Spleen (tissue), 13 donors: ENCODE measurements at regions of chr20 and their contacts with region 1.

Region 1: DNA sequence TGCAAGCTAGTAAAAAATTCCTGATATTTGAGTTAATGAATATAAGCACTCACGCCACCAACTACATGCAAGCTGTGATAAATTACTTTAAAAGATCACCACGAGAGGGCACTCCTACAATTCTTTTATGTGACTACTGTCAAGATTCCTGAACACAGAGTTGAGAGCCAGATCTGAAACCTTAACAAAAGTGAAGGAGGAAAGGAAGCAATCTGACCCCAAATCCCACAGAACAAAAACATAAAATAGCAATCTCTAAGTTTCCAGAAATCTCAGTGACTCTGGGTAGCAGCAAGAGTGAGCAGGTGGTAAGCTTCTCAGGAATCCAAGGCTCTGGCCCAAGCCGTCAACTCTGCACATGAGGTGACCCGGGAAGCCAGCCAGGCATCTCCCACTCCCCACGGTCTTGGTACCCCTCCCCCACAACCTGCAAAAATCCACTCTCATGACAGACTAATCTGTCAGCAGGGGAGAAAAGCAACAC is 55.1 kb downstream of the STAU1 start:
- DNase-seq: no peak
- H3K4me3 ChIP-seq: no peak overlapping the region
- H3K27ac ChIP-seq: peak overlapping the region in 3 of 8 donors; percentile 20 to 31 (median 21)
- H3K4me1 ChIP-seq: peaks cover 3 to 13% (median 7%) of the 10 kb centered on the region in 6 donors
- H3K27me3 ChIP-seq: no peaks in the 10 kb centered on the region
- CTCF ChIP-seq: peak in 9 of 11 experiments; percentile 23 to 63 (median 55)
- POLR2A ChIP-seq: no peak

Region 2: DNA sequence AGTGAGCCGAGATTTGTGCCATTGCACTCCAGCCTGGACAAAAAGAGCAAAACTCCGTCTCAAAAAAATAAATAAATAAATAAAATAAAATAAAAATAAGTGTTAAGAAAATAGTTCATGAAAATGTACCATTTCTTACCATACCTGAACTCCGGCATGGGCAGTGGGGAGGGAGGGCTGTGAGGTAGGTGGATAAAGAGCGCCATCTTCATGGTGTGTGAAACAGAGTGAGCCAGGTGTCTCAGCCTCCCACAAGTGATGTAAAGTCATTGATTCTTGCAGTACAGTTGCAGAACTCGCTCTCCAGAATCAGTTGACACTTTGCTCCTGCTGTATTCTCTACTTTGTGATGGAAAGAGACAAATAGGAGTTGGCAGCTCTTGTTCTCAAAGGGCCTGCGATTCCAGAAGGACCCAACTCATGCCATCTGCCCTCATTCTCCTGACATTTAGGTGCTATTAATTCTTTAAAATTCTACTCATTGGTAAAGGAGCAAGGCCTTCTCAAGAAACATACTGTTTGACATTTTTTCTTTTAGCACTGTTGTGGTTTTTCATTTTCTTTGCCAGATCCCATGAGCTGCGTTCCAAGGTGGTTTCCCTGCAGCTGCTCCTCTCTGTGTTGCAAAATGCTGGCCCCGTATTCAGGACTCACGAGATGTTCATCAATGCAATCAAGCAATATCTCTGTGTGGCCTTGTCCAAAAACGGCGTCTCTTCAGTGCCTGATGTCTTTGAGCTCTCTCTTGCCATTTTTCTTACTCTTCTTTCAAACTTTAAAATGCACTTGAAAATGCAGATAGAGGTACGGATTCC is 162.3 kb before region 1 on chr20:
- intact Hi-C with region 1: no loop called
- DNase-seq: no peak
- H3K4me3 ChIP-seq: no peak overlapping the region
- H3K27ac ChIP-seq: no peak overlapping the region
- H3K4me1 ChIP-seq: peaks cover 0 to 35% (median 3%) of the 10 kb centered on the region in 6 donors
- H3K27me3 ChIP-seq: no peaks in the 10 kb centered on the region
- CTCF ChIP-seq: no peak
- POLR2A ChIP-seq: no peak

Region 3: DNA sequence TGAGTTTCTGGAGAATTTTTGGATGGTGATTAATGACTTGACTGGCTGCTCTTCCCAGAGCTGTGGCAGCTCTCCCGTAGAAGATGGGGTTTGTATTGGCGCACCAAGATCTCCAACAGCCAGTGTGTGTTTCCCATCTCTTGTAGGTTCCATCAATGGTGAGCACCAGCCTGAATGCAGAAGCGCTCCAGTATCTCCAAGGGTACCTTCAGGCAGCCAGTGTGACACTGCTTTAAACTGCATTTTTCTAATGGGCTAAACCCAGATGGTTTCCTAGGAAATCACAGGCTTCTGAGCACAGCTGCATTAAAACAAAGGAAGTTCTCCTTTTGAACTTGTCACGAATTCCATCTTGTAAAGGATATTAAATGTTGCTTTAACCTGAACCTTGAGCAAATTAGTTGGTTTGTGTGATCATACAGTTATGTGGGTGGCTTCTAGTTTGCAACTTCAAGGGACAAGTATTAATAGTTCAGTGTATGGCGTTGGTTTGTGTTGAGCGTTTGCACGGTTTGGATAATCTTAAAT is 36.8 kb before region 1 on chr20:
- intact Hi-C with region 1: no loop called
- DNase-seq: no peak
- H3K4me3 ChIP-seq: no peak overlapping the region
- H3K27ac ChIP-seq: no peak overlapping the region
- H3K4me1 ChIP-seq: peaks cover 0 to 29% (median 10%) of the 10 kb centered on the region in 6 donors
- H3K27me3 ChIP-seq: no peaks in the 10 kb centered on the region
- CTCF ChIP-seq: no peak
- POLR2A ChIP-seq: no peak

Region 4: GRCh38 chr20:49216991-49217578 is 84.0 kb after region 1 on chr20:
- intact Hi-C with region 1: loop called (anchors 2 kb)
- DNase-seq: peak; percentile 97
- H3K4me3 ChIP-seq: peak overlapping the region in 1 of 8 donors; percentile 27
- H3K27ac ChIP-seq: peak overlapping the region in 2 of 8 donors; percentile 21 to 55
- H3K4me1 ChIP-seq: peaks cover 8 to 44% (median 24%) of the 10 kb centered on the region in 6 donors
- H3K27me3 ChIP-seq: no peaks in the 10 kb centered on the region
- CTCF ChIP-seq: peak; percentile 77 to 92 (median 88)
- POLR2A ChIP-seq: no peak